BJ (cell line): ENCODE measurements at regions of chr9 and their contacts with region 1.

Region 1: GRCh38 chr9:77433675-77434445 is 214.3 kb downstream of the GNA14 start:
- DNase-seq: no peak
- H3K4me3 ChIP-seq: no peak overlapping the region
- H3K27me3 ChIP-seq: peaks cover 2% of the 10 kb centered on the region; the same call in 1 of the 2 replicates
- CTCF ChIP-seq: peak; percentile 100

Region 2: DNA sequence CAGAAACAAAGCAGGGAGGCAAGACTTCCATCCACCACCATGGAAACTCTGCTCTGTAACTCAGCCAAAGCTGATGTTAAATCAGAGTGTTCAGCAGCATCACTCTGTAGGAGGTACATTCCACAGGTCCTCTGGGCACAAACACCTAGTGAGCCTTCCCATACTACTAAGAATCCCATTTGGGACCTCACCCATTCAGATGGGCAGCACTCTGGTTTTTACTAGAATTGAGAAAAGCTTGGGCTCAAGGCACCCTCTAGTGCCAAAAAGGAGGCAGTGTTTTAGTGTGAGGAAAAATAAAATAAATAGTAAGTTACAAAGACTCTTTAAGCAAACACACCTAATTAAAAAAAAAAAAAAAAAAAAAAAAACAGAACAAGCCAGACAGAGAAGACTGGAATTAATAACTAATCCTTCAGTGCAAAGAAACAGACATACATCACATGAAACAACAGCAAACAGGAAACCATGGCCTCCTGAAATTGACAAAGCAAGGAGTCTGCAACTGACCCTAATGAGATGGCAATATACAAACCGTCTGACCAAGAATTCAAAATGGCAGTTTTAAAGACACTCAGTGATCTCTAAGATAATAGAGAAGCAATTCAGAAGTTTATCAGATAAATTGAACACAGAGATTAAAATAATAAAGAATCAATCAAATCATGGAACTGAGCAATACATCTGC is 54.7 kb after region 1 on chr9:
- CTCF ChIA-PET with region 1: interaction called, 34 read pairs
- POLR2A ChIA-PET with region 1: no interaction called
- DNase-seq: no peak
- H3K4me3 ChIP-seq: no peak overlapping the region
- H3K27me3 ChIP-seq: no peaks in the 10 kb centered on the region
- CTCF ChIP-seq: peak; percentile 64

Region 3: GRCh38 chr9:77751341-77752091 is 317.7 kb after region 1 on chr9:
- CTCF ChIA-PET with region 1: interaction called, 22 read pairs
- POLR2A ChIA-PET with region 1: no interaction called
- DNase-seq: peak; percentile 80
- H3K4me3 ChIP-seq: no peak overlapping the region
- H3K27me3 ChIP-seq: no peaks in the 10 kb centered on the region
- CTCF ChIP-seq: peak; percentile 49

Region 4: DNA sequence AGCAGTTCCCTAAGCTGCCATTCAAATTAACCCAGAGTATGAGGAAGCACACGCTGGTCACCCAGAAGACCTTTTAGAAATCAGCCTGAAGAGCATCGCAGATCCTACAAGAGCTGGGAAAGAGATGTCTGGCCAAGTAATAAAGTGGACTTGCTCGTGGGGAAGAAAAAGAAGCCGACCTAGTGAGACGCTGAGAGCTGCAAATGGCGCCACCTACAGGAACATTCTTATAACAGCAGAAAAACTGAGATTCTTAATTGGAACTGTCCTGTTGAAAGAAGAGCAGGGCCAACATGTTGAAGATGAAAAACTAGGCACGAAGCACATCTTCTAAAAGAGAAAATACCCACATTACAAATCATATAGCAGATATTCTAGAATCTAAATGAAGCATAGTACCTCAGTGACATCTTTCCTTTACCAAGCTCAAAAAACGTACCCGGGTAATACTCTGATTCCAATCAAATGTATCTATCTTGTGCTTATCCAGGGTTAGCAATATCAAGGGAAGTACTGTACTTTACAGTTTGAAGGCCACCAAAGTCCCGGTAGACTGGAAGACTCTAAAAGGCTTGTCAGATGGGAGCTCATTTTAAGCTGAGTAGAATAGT is 601.6 kb after region 1 on chr9:
- CTCF ChIA-PET with region 1: interaction called, 23 read pairs
- POLR2A ChIA-PET with region 1: no interaction called
- DNase-seq: peak; percentile 44
- H3K4me3 ChIP-seq: no peak overlapping the region
- H3K27me3 ChIP-seq: no peaks in the 10 kb centered on the region
- CTCF ChIP-seq: peak; percentile 84